ENCODE measurements at regions of chr11 and their contacts with region 1.

Region 1: DNA sequence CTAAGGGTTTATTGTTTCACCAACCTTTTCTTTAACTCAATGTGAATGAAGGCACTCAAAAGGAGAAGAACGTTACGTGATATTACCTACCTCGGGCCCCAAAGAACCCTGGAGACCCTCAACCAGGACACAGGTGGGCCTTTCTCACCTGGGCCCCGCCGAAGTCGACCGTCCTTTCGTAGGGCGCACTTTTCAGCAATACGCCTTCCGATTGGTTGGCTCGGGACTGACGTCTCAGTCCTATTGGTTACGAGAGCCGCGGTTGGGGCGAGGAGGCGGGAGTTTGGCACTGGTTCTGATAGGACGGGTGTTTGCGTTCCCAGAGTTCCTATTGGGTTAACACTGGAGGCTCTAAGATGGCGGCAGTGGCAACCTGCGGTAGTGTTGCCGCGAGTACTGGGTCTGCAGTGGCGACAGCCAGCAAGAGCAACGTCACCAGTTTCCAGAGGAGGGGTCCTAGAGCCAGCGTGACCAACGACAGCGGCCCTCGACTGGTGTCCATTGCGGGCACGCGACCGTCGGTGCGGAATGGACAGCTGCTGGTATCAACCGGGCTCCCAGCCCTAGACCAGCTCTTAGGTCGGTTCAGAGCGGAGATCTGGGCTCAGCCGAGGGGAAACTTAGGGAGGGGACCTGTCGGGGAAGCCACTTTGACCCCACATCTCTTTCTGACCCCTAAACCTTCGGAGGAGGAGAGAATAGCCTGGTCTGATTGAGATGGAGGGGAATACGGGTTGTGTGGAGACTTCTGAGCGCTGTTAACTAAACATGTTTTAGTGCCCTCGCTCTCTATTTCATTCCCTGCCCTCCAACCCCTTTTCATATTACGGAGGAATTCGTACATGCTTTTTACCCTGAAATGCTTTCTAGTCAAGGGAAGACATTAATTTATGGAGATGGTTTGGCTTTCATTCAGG is at the starts of genes ELP4 and IMMP1L:
- DNase-seq: peak; percentile 91 to 98 (median 95)
- ATAC-seq: peak; percentile 98
- H3K4me3 ChIP-seq: peak within 1 kb of the TSS; percentile 96 to 99
- H3K4me3 Mint-ChIP-seq: peak within 1 kb of the TSS; percentile 100
- H3K27ac ChIP-seq: peak within 1 kb of the TSS; percentile 86 to 94
- H3K27ac Mint-ChIP-seq: peak within 1 kb of the TSS; percentile 99
- H3K4me1 ChIP-seq: peaks cover 24% of the 10 kb centered on the region
- H3K4me1 Mint-ChIP-seq: peaks cover 58% of the 10 kb centered on the region
- H3K27me3 ChIP-seq: no peaks in the 10 kb centered on the region
- H3K27me3 Mint-ChIP-seq: no peaks in the 10 kb centered on the region
- CTCF ChIP-seq: no peak
- total RNA-seq, gene ELP4: 7.9 to 8.0 TPM
- total RNA-seq, gene IMMP1L: 4.8 to 9.4 TPM

Region 2: DNA sequence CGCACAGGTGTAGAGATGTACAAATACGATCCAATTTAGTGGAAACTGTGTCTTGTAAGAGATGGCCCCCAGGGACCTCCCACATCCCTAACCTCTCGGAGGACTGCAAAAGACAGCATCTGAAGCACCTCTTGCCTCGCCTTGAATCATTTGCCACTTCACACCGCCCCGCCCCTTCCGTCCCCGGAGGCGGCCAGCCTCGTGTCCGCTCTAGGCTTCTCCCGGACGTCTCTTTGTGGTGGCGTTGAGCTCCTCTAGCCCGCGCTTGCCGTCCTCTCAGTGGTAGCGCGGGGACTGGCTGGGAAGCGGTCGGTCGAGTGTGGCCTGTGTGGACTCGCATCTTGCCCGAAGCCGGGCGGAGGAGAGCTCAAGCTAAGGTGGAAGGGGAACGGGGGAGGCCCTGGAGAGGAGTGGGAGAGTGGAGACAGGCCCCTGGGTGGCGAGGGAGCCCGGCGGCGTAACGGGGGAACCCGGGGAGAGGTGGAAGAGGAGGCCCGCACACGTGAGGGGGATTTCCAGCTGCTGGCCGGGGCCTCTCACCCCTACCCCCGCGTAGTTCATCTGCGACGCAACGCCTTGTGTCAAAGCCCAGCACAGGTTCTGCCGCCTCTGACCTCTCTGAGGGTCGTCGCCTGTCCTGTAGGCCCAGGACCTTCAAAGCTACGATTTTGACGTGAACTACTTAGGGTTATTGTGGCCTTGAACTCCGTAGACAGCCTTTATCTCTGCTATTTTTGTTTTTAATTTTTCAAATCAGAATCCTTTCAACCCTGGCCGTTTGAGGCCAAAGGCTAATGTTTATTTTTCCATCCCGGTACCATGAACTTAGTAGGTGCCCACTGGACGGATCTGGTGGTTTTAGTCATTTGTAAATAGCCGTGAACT is 1186.6 kb before region 1 on chr11 and contains the start of gene ARL14EP:
- CTCF ChIA-PET with region 1: no interaction called
- POLR2A ChIA-PET with region 1: interaction called, 3 read pairs
- intact Hi-C with region 1: loop called (anchors 1 to 5 kb)
- DNase-seq: peak; percentile 73 to 93 (median 88)
- ATAC-seq: peak; percentile 82
- H3K4me3 ChIP-seq: peak within 1 kb of the TSS; percentile 79 to 86
- H3K4me3 Mint-ChIP-seq: peak within 1 kb of the TSS; percentile 99
- H3K27ac ChIP-seq: peak within 1 kb of the TSS; percentile 83 to 84
- H3K27ac Mint-ChIP-seq: peak within 1 kb of the TSS; percentile 100
- H3K4me1 ChIP-seq: peaks cover 45% of the 10 kb centered on the region
- H3K4me1 Mint-ChIP-seq: peaks cover 52% of the 10 kb centered on the region
- H3K27me3 ChIP-seq: no peaks in the 10 kb centered on the region
- H3K27me3 Mint-ChIP-seq: no peaks in the 10 kb centered on the region
- CTCF ChIP-seq: no peak
- total RNA-seq, gene ARL14EP: 28.1 to 30.6 TPM

Region 3: GRCh38 chr11:31529701-31530100 is 20.0 kb after region 1 on chr11:
- CTCF ChIA-PET with region 1: no interaction called
- POLR2A ChIA-PET with region 1: no interaction called
- intact Hi-C with region 1: no loop called
- DNase-seq: no peak
- ATAC-seq: no peak
- H3K4me3 ChIP-seq: no peak overlapping the region
- H3K4me3 Mint-ChIP-seq: no peak overlapping the region
- H3K27ac ChIP-seq: no peak overlapping the region
- H3K27ac Mint-ChIP-seq: no peak overlapping the region
- H3K4me1 ChIP-seq: no peaks in the 10 kb centered on the region
- H3K4me1 Mint-ChIP-seq: peaks cover 3% of the 10 kb centered on the region
- H3K27me3 ChIP-seq: no peaks in the 10 kb centered on the region
- H3K27me3 Mint-ChIP-seq: no peaks in the 10 kb centered on the region
- CTCF ChIP-seq: no peak

Region 4: GRCh38 chr11:32090545-32091373 is 581.1 kb after region 1 on chr11 and contains the start of gene RCN1:
- CTCF ChIA-PET with region 1: no interaction called
- POLR2A ChIA-PET with region 1: no interaction called
- intact Hi-C with region 1: loop called (anchors 2 to 10 kb)
- DNase-seq: peak in 7 of 9 experiments; percentile 11 to 62 (median 30)
- ATAC-seq: peak; percentile 60
- H3K4me3 ChIP-seq: peak within 1 kb of the TSS; percentile 70 to 72
- H3K4me3 Mint-ChIP-seq: peak within 1 kb of the TSS; percentile 85
- H3K27ac ChIP-seq: peak within 1 kb of the TSS; percentile 62 to 76
- H3K27ac Mint-ChIP-seq: peak within 1 kb of the TSS; percentile 83
- H3K4me1 ChIP-seq: peaks cover 9% of the 10 kb centered on the region
- H3K4me1 Mint-ChIP-seq: peaks cover 32% of the 10 kb centered on the region
- H3K27me3 ChIP-seq: no peaks in the 10 kb centered on the region
- H3K27me3 Mint-ChIP-seq: peaks cover 13% of the 10 kb centered on the region
- CTCF ChIP-seq: no peak
- total RNA-seq, gene RCN1: 8.2 to 10.8 TPM

Region 5: GRCh38 chr11:32583459-32584271 is 1074.0 kb after region 1 on chr11 and contains the start of gene EIF3M:
- CTCF ChIA-PET with region 1: no interaction called
- POLR2A ChIA-PET with region 1: no interaction called
- intact Hi-C with region 1: loop called (anchors 5 to 10 kb)
- DNase-seq: peak; percentile 91 to 98 (median 95)
- ATAC-seq: peak; percentile 98
- H3K4me3 ChIP-seq: peak within 1 kb of the TSS; percentile 80 to 93
- H3K4me3 Mint-ChIP-seq: peak within 1 kb of the TSS; percentile 99
- H3K27ac ChIP-seq: peak within 1 kb of the TSS; percentile 81 to 86
- H3K27ac Mint-ChIP-seq: peak within 1 kb of the TSS; percentile 99
- H3K4me1 ChIP-seq: peaks cover 29% of the 10 kb centered on the region
- H3K4me1 Mint-ChIP-seq: peaks cover 39% of the 10 kb centered on the region
- H3K27me3 ChIP-seq: no peaks in the 10 kb centered on the region
- H3K27me3 Mint-ChIP-seq: no peaks in the 10 kb centered on the region
- CTCF ChIP-seq: no peak
- total RNA-seq, gene EIF3M: 269 to 274 TPM

Measured in CD8-positive, alpha-beta T cell (primary cell).